Breast epithelium (tissue), 4 donors: ENCODE measurements at regions of chrX and their contacts with region 1.

Region 1: GRCh38 chrX:18654875-18655836 is 16.8 kb downstream of the RS1 start:
- DNase-seq: peak in 1 of 2 donors; percentile 37
- H3K4me3 ChIP-seq: no peak overlapping the region
- H3K27ac ChIP-seq: no peak overlapping the region
- H3K4me1 ChIP-seq: no peaks in the 10 kb centered on the region
- H3K27me3 ChIP-seq: peaks cover 0 to 1% of the 10 kb centered on the region in 2 donors
- CTCF ChIP-seq: no peak
- POLR2A ChIP-seq: no peak

Region 2: GRCh38 chrX:18630934-18631333 is 24.2 kb before region 1 on chrX:
- intact Hi-C with region 1: loop called (anchors 1 kb)
- DNase-seq: no peak
- H3K4me3 ChIP-seq: no peak overlapping the region
- H3K27ac ChIP-seq: no peak overlapping the region
- H3K4me1 ChIP-seq: no peaks in the 10 kb centered on the region
- H3K27me3 ChIP-seq: peaks cover 0 to 6% of the 10 kb centered on the region in 2 donors
- CTCF ChIP-seq: no peak
- POLR2A ChIP-seq: no peak

Region 3: GRCh38 chrX:20309806-20310205 is 1654.7 kb after region 1 on chrX:
- intact Hi-C with region 1: no loop called
- DNase-seq: no peak
- H3K4me3 ChIP-seq: no peak overlapping the region
- H3K27ac ChIP-seq: no peak overlapping the region
- H3K4me1 ChIP-seq: no peaks in the 10 kb centered on the region
- H3K27me3 ChIP-seq: peaks cover 0 to 25% of the 10 kb centered on the region in 2 donors
- CTCF ChIP-seq: no peak
- POLR2A ChIP-seq: no peak